Naive thymus-derived CD4-positive, alpha-beta T cell (primary cell): ENCODE measurements at regions of chr14 and their contacts with region 1.

Region 1: DNA sequence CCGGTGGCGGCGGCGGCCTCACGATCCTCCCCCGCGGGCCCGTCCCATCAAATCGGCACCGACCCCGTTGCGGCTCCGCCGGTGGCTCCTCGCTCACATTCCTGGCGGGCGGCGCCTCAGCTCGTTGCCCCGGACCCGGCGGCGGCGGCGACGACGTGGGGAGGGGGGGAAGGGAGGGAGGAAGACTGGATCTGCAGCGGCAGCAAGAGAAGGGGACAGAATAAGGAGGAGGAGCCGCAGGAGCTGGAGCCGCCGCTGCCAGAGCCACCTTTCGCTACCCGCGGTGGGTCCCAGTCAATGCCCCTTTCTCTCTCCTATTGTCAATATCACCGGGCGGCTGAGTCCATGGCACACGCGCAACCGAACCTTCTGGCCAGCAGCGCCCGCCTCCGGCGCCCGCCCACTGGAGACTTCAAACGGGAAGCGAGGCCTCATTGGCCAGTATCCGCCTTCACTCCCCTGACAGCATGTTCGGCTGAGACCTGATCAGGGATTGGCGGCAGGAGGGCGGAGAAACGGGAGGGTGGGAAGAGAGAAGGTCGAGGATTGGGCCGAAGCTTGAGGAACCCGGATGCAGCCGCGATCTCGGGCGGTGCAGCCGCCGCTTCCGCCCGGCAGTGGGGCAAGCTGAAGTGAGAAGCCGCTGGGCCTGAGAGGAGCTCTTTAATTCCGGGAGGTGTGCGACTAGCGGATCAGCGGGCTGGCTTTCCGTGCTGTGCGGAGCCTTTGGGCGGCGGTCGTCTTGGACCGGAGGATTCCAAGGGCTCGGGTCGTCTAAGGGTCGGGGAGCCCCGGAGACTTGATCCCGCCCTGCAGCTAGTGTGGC is at the start of gene PPP2R5E:
- DNase-seq: peak; percentile 90 to 98 (median 97)
- ATAC-seq: peak; percentile 98
- H3K4me3 ChIP-seq: peak within 1 kb of the TSS; percentile 89
- H3K4me3 Mint-ChIP-seq: peak within 1 kb of the TSS; percentile 87 to 100 (median 97)
- H3K27ac ChIP-seq: peak within 1 kb of the TSS; percentile 93
- H3K27ac Mint-ChIP-seq: peak within 1 kb of the TSS; percentile 88 to 98 (median 93)
- H3K4me1 ChIP-seq: peaks cover 11 to 20% of the 10 kb centered on the region in 2 donors
- H3K4me1 Mint-ChIP-seq: peaks cover 23 to 40% (median 36%) of the 10 kb centered on the region in 7 donors
- H3K27me3 ChIP-seq: no peaks in the 10 kb centered on the region
- H3K27me3 Mint-ChIP-seq: peaks cover 0 to 2% (median 0%) of the 10 kb centered on the region in 5 donors
- total RNA-seq, gene PPP2R5E: 36.9 to 47.8 (median 37.7) TPM

Region 2: GRCh38 chr14:63437953-63438757 is 105.1 kb before region 1 on chr14:
- CTCF ChIA-PET with region 1: no interaction called
- POLR2A ChIA-PET with region 1: no interaction called
- intact Hi-C with region 1: loop called in 1 of 2 experiments (anchors 1 kb)
- DNase-seq: peak in 7 of 9 donors; percentile 8 to 41 (median 21)
- ATAC-seq: peak; percentile 67
- H3K4me3 ChIP-seq: no peak overlapping the region
- H3K4me3 Mint-ChIP-seq: peak overlapping the region in 9 of 10 donors; percentile 18 to 75 (median 59)
- H3K27ac ChIP-seq: no peak overlapping the region
- H3K27ac Mint-ChIP-seq: peak overlapping the region in 7 of 9 donors; percentile 2 to 82 (median 59)
- H3K4me1 ChIP-seq: peaks cover 0 to 19% of the 10 kb centered on the region in 2 donors
- H3K4me1 Mint-ChIP-seq: peaks cover 43 to 82% (median 72%) of the 10 kb centered on the region in 7 donors
- H3K27me3 ChIP-seq: no peaks in the 10 kb centered on the region
- H3K27me3 Mint-ChIP-seq: no peaks in the 10 kb centered on the region

Region 3: DNA sequence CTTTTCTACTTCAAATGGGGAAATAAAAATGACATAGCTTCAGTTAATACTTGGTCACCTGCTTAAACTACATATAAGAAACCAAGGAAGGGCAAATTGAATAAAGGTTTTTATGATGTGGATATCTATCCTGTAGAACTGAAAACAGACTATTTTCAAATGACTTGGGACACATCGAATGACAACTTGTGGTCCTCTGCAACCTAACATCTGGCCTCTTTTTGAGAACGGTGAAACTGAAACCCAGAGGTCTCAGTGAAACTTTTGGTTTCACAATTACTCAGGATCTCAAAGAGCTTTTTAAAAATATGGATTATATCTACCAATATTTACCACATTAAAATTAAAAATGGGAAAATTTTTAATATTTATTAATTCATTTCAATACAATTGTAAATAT is 65.2 kb before region 1 on chr14:
- CTCF ChIA-PET with region 1: no interaction called
- POLR2A ChIA-PET with region 1: interaction called, 3 read pairs
- intact Hi-C with region 1: loop called in 1 of 2 experiments (anchors 2 kb)
- DNase-seq: peak in 1 of 9 donors; percentile 14
- ATAC-seq: peak; percentile 60
- H3K4me3 ChIP-seq: peak overlapping the region; percentile 31
- H3K4me3 Mint-ChIP-seq: peak overlapping the region in 8 of 10 donors; percentile 22 to 75 (median 64)
- H3K27ac ChIP-seq: no peak overlapping the region
- H3K27ac Mint-ChIP-seq: peak overlapping the region in 4 of 9 donors; percentile 5 to 80 (median 57)
- H3K4me1 ChIP-seq: peaks cover 4 to 16% of the 10 kb centered on the region in 2 donors
- H3K4me1 Mint-ChIP-seq: peaks cover 21 to 60% (median 51%) of the 10 kb centered on the region in 7 donors
- H3K27me3 ChIP-seq: no peaks in the 10 kb centered on the region
- H3K27me3 Mint-ChIP-seq: no peaks in the 10 kb centered on the region

Region 4: GRCh38 chr14:63727774-63728728 is 184.8 kb after region 1 on chr14 and contains the start of gene SGPP1:
- CTCF ChIA-PET with region 1: interaction called, 4 read pairs
- POLR2A ChIA-PET with region 1: interaction called, 5 read pairs
- intact Hi-C with region 1: loop called (anchors 1 to 2 kb)
- DNase-seq: peak; percentile 60 to 83 (median 77)
- ATAC-seq: peak; percentile 95
- H3K4me3 ChIP-seq: peak within 1 kb of the TSS; percentile 99
- H3K4me3 Mint-ChIP-seq: peak within 1 kb of the TSS; percentile 97 to 100 (median 99)
- H3K27ac ChIP-seq: peak within 1 kb of the TSS; percentile 89
- H3K27ac Mint-ChIP-seq: peak within 1 kb of the TSS; percentile 94 to 99 (median 97)
- H3K4me1 ChIP-seq: peaks cover 11 to 16% of the 10 kb centered on the region in 2 donors
- H3K4me1 Mint-ChIP-seq: peaks cover 29 to 51% (median 44%) of the 10 kb centered on the region in 7 donors
- H3K27me3 ChIP-seq: no peaks in the 10 kb centered on the region
- H3K27me3 Mint-ChIP-seq: peaks cover 0 to 22% (median 0%) of the 10 kb centered on the region in 5 donors
- total RNA-seq, gene SGPP1: 15.1 to 17.7 (median 15.7) TPM

Region 5: DNA sequence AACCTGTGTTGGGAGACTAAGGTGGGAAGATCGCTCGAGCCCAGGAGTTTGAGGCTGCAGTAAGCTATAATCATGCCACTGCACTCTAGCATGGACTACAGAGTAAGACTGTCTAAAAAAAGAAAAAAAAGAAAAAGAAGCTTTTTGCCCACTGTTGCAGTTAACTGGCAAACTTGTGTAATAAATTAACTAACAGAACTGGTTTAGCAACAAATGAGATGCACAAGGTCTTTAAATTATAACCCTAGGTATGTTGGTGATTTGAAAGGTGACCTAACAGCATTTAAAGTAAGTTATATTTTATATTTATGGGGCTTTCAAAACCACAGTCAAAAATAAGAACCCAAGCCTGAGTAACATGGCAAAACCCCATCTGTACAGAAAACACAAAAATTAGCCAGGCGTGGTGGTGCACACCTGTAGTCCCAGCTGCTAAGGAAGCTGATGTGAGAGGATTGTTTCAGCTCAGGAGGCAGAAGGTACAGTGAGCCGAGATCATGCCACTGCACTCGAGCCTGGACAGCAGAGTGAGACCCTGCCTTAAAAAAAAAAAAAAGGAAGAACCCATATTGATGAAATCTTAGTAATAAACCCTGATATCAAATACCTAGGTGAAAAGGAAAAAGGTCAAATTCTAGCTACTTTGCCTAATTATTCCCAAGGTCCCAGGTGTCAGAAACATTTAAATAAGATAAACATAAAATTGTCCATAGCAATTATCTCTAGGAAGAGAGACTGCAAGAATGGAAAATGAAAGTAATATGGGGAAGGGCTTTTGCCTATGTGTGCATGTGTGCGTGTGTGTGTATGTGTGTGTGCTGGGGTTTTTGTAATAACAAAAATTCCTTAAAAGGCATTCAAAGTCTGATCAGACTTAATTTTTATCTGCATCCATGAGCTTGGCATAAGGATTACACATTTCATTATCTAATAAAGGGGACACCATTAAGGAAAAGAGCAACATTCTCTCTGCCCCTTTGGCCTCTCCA is 325.0 kb after region 1 on chr14:
- CTCF ChIA-PET with region 1: no interaction called
- POLR2A ChIA-PET with region 1: no interaction called
- intact Hi-C with region 1: loop called in 1 of 2 experiments (anchors 1 kb)
- DNase-seq: peak in 6 of 9 donors; percentile 15 to 44 (median 28)
- ATAC-seq: no peak
- H3K4me3 ChIP-seq: no peak overlapping the region
- H3K4me3 Mint-ChIP-seq: peak overlapping the region; percentile 46 to 84 (median 75)
- H3K27ac ChIP-seq: peak overlapping the region; percentile 36
- H3K27ac Mint-ChIP-seq: peak overlapping the region; percentile 84 to 98 (median 92)
- H3K4me1 ChIP-seq: peaks cover 36 to 60% of the 10 kb centered on the region in 2 donors
- H3K4me1 Mint-ChIP-seq: peaks cover 37 to 78% (median 64%) of the 10 kb centered on the region in 7 donors
- H3K27me3 ChIP-seq: no peaks in the 10 kb centered on the region
- H3K27me3 Mint-ChIP-seq: no peaks in the 10 kb centered on the region

Region 6: DNA sequence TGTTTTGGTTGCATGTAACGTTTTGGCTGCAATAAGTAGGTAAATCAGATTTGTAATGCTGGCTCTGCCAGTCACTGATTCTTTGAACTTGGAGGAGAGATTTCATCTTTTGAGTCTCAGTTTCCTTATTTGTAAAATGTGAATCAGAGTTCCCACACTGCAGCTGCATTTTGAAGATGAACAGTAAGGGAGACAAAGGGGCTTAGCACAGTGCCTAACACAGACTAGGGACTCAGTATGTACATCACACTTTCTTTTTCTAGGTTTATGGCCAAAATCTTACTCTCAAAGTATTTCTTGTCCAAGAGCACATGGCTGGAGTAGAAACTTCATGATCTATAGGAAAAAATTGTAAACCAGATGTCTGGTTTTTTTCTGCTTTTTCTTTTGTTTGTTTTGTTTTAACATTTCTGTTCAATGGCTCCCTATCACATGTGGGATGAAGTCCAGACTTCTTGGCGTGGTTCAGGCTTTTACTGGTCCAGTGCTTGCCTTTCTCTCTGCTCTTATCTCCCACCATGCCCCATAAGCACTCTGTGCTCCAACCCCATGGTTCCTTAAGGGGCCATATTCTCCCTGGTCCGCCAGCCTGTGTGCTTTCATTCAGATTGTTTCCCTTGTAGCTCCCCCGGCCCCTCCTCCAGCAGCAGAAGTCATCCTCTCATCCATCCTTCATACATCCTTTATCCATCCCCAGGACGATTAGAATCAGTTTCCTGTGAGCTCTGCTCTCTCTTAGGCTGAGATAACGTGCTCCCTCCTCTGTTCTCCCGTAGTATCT is 367.6 kb after region 1 on chr14:
- CTCF ChIA-PET with region 1: no interaction called
- POLR2A ChIA-PET with region 1: no interaction called
- intact Hi-C with region 1: no loop called
- DNase-seq: no peak
- ATAC-seq: no peak
- H3K4me3 ChIP-seq: no peak overlapping the region
- H3K4me3 Mint-ChIP-seq: peak overlapping the region in 2 of 10 donors; percentile 13 to 17
- H3K27ac ChIP-seq: no peak overlapping the region
- H3K27ac Mint-ChIP-seq: peak overlapping the region in 4 of 9 donors; percentile 23 to 80 (median 42)
- H3K4me1 ChIP-seq: peaks cover 0 to 11% of the 10 kb centered on the region in 2 donors
- H3K4me1 Mint-ChIP-seq: peaks cover 24 to 49% (median 35%) of the 10 kb centered on the region in 7 donors
- H3K27me3 ChIP-seq: no peaks in the 10 kb centered on the region
- H3K27me3 Mint-ChIP-seq: no peaks in the 10 kb centered on the region

Region 7: GRCh38 chr14:64387694-64388532 is 844.7 kb after region 1 on chr14 and contains the start of gene MTHFD1:
- CTCF ChIA-PET with region 1: no interaction called
- POLR2A ChIA-PET with region 1: interaction called, 3 read pairs
- intact Hi-C with region 1: loop called (anchors 1 kb)
- DNase-seq: peak; percentile 93 to 97 (median 96)
- ATAC-seq: peak; percentile 90
- H3K4me3 ChIP-seq: peak within 1 kb of the TSS; percentile 89
- H3K4me3 Mint-ChIP-seq: peak within 1 kb of the TSS; percentile 92 to 99 (median 96)
- H3K27ac ChIP-seq: peak within 1 kb of the TSS; percentile 79
- H3K27ac Mint-ChIP-seq: peak within 1 kb of the TSS; percentile 90 to 99 (median 95)
- H3K4me1 ChIP-seq: peaks cover 11 to 17% of the 10 kb centered on the region in 2 donors
- H3K4me1 Mint-ChIP-seq: peaks cover 18 to 49% (median 41%) of the 10 kb centered on the region in 7 donors
- H3K27me3 ChIP-seq: no peaks in the 10 kb centered on the region
- H3K27me3 Mint-ChIP-seq: peaks cover 0 to 4% (median 0%) of the 10 kb centered on the region in 5 donors
- total RNA-seq, gene MTHFD1: 28.0 to 189 (median 30.2) TPM